ENCODE measurements at regions of chr1 and their contacts with region 1.

Region 1: DNA sequence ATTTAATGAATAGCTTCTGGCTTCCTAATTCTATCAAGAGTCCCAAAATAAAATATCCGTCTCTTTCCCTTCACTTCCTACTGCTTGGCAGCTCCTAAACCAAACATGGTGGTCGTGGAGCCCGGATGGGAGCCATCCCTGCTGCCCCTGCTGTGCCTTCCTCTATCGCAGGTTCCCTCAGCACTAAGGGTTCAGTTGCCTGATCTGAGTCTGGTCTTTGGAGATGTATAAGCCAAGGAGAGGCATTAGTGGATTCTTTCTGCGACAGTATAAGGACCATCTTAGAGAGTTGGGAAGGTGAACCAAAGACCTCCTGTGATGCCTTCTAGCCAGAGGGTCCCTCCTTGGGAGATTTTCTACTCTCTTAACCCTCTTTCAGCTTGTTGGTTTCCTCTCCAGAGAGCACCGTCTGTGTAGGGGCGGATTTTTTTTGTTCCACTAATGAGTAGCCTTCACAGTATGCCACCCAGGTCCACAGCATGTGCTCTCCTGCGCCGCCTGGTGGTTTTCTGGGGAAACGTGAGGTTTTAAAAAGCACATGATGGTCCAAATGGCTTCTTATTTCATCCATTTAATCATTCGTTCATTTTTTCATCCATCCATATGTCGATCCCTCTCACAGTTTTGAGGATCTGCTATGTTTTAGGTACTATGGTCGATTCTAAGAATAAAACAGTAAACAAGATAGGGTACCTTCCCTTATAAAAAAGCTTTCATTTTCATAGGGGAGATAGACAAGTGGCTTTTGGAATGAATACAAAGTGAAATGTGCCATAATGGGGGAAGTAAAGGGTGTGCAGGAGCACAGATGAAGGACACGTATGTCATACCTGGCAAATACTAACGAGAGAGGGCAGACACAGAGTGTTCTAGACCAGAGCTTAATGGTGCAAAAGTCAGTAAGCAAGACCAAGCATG is 71.0 kb downstream of the NFASC start:
- DNase-seq: peak in 9 of 10 donors; percentile 69 to 89 (median 79)
- H3K4me3 ChIP-seq: peak overlapping the region in 3 of 59 donors; percentile 1 to 11 (median 8)
- H3K27ac ChIP-seq: peak overlapping the region in 56 of 59 donors; percentile 1 to 88 (median 71)
- H3K27me3 ChIP-seq: no peaks in the 10 kb centered on the region
- CTCF ChIP-seq: peak; percentile 81 to 99 (median 94)

Region 2: GRCh38 chr1:204565617-204566582 is 375.8 kb before region 1 on chr1:
- intact Hi-C with region 1: loop called in 1 of 2 experiments (anchors 5 kb)
- DNase-seq: peak in 8 of 10 donors; percentile 37 to 75 (median 63)
- H3K4me3 ChIP-seq: peak overlapping the region in 36 of 59 donors; percentile 1 to 45 (median 28)
- H3K27ac ChIP-seq: peak overlapping the region in 15 of 59 donors; percentile 4 to 54 (median 23)
- H3K27me3 ChIP-seq: no peaks in the 10 kb centered on the region
- CTCF ChIP-seq: peak; percentile 59 to 90 (median 75)

Region 3: GRCh38 chr1:204806943-204807687 is 134.6 kb before region 1 on chr1:
- intact Hi-C with region 1: loop called (anchors 1 to 5 kb)
- DNase-seq: peak; percentile 72 to 87 (median 82)
- H3K4me3 ChIP-seq: peak overlapping the region; percentile 27 to 77 (median 56)
- H3K27ac ChIP-seq: peak overlapping the region in 49 of 59 donors; percentile 1 to 89 (median 65)
- H3K27me3 ChIP-seq: no peaks in the 10 kb centered on the region
- CTCF ChIP-seq: peak in 55 of 56 donors; percentile 57 to 100 (median 98)

Region 4: DNA sequence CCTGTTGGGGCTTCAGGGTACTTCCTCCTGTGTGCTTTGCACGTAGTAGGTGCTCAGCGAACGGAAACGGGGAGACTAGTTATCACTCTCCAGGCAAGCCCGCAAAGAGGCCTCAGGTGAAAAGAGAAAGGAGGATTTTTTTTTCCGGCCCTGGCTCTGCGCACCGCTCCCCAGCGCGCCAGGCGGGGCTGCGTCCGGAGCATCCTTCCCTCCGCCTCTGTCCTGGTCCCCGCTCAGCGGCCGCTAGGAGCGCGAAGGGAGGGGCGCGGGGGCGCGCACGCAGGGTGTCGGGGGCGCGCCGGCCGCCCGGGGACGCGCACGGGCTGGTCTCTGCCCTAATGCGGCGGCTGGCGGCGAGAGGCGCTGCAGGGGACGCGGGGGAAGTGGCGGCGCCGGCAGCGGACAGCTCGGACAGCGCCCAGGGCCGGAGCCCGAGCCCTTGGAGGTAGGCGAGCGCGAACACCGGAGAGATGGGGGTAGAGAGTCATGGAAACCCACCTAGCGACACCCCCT is 113.3 kb before region 1 on chr1:
- intact Hi-C with region 1: loop called (anchors 5 kb)
- DNase-seq: peak; percentile 76 to 93 (median 85)
- H3K4me3 ChIP-seq: peak overlapping the region; percentile 50 to 84 (median 74)
- H3K27ac ChIP-seq: peak overlapping the region in 58 of 59 donors; percentile 67 to 96 (median 92)
- H3K27me3 ChIP-seq: no peaks in the 10 kb centered on the region
- CTCF ChIP-seq: peak in 55 of 56 donors; percentile 22 to 75 (median 54)

Region 5: DNA sequence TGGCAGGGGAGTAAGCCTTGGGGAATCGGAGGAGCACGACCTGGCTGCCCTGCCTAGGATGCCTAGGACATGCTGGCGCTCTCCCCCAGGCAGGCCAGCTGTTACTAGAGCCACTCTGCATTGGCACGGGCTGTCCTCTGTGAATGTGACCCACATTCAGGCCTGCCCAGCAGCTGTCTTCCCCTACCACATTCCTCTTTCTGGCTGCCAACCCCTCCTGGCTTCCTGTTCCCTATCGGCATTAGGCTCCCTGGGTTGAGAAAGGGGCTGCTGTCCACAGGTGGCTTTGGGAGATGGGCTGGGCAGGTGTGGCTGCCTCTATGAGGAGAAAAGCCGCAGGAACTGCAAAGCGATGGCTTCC is 73.4 kb before region 1 on chr1:
- intact Hi-C with region 1: loop called (anchors 2 to 5 kb)
- DNase-seq: peak in 9 of 10 donors; percentile 65 to 90 (median 81)
- H3K4me3 ChIP-seq: peak overlapping the region in 12 of 59 donors; percentile 1 to 33 (median 16)
- H3K27ac ChIP-seq: peak overlapping the region; percentile 62 to 98 (median 94)
- H3K27me3 ChIP-seq: no peaks in the 10 kb centered on the region
- CTCF ChIP-seq: peak in 5 of 56 donors; percentile 9 to 23 (median 16)

Region 6: DNA sequence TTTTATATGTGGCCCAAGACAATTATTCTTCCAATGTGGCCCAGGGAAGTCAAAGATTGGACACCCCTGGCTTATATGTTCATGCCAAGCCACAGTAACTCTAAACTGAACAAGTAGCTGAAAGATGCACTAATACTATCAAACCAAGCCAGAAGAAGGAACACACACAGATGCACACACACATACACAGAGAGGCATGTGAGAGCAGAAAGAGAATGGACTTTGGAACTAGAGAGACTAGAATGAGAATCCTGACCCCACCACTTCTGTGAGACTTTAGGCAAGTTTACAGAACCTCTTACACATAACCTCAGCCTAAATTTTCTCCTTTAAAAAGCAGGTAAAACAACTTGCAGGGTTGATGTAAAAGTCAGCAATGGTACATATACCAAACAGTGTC is 153.7 kb after region 1 on chr1:
- intact Hi-C with region 1: no loop called
- DNase-seq: no peak
- H3K4me3 ChIP-seq: no peak overlapping the region
- H3K27ac ChIP-seq: no peak overlapping the region
- H3K27me3 ChIP-seq: no peaks in the 10 kb centered on the region
- CTCF ChIP-seq: no peak